ENCODE measurements at regions of chr13 and their contacts with region 1.

Region 1: GRCh38 chr13:29935309-29935981 is 85.0 kb upstream of the UBL3 start:
- DNase-seq: peak; percentile 91
- H3K4me3 Mint-ChIP-seq: peak overlapping the region; percentile 89
- H3K27ac Mint-ChIP-seq: peak overlapping the region; percentile 98
- H3K4me1 Mint-ChIP-seq: peaks cover 63% of the 10 kb centered on the region
- H3K27me3 Mint-ChIP-seq: no peaks in the 10 kb centered on the region

Region 2: GRCh38 chr13:29850224-29850898 is 85.1 kb before region 1 on chr13 and contains the start of gene UBL3:
- CTCF ChIA-PET with region 1: interaction called, 11 read pairs
- DNase-seq: peak; percentile 96
- H3K4me3 Mint-ChIP-seq: peak within 1 kb of the TSS; percentile 87
- H3K27ac Mint-ChIP-seq: peak within 1 kb of the TSS; percentile 99
- H3K4me1 Mint-ChIP-seq: peaks cover 48% of the 10 kb centered on the region
- H3K27me3 Mint-ChIP-seq: peaks cover 4% of the 10 kb centered on the region

Region 3: GRCh38 chr13:29923554-29924481 is 11.6 kb before region 1 on chr13:
- CTCF ChIA-PET with region 1: interaction called, 43 read pairs
- DNase-seq: peak; percentile 53
- H3K4me3 Mint-ChIP-seq: no peak overlapping the region
- H3K27ac Mint-ChIP-seq: no peak overlapping the region
- H3K4me1 Mint-ChIP-seq: peaks cover 25% of the 10 kb centered on the region
- H3K27me3 Mint-ChIP-seq: peaks cover 6% of the 10 kb centered on the region

Region 4: DNA sequence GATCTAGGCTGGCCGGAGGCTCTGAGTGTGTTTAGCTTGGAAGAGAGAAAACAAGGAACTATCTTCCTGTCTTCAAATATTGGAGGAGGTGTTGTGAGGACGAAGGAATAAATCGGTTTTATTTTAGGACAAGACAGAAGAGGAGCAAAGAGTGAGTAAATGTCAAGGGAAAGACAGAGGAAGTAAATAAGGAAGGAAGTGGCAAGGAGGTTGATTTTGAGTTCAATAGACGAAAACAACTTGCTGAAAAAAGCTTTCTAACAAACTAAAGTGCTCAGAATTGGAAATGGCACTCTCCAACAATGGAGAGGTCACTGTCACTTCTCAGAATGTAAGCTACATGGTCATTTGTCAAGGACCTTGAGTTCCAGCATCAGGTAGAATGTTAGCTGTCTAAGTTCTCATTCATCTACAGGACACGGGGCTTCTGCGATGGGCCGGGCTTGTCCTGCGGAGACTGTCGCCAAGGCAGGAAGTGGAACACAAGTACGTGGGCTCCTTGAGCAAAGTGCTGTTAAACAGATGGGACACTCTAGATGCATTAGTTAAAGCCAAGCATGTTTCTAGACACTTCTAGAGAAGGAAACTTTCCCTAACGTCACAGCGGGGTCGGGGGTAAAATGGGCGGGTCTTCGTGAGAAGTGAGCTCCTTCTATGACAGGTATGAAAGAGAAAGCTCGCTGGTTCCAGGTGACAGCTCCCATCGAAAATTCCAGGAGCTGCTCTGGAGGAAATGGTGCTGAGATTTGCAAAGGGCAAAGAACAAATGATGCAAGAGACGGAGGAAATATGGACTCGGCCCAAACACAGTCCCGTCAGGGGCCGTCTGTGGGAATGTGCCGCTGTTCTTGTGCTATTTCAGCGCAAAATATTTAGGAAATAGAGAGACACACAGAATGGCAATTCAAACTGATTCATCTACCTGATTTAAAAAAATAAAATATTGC is 18.9 kb after region 1 on chr13:
- CTCF ChIA-PET with region 1: interaction called, 10 read pairs
- DNase-seq: peak; percentile 71
- H3K4me3 Mint-ChIP-seq: peak overlapping the region; percentile 61
- H3K27ac Mint-ChIP-seq: peak overlapping the region; percentile 94
- H3K4me1 Mint-ChIP-seq: peaks cover 66% of the 10 kb centered on the region
- H3K27me3 Mint-ChIP-seq: peaks cover 4% of the 10 kb centered on the region

Region 5: DNA sequence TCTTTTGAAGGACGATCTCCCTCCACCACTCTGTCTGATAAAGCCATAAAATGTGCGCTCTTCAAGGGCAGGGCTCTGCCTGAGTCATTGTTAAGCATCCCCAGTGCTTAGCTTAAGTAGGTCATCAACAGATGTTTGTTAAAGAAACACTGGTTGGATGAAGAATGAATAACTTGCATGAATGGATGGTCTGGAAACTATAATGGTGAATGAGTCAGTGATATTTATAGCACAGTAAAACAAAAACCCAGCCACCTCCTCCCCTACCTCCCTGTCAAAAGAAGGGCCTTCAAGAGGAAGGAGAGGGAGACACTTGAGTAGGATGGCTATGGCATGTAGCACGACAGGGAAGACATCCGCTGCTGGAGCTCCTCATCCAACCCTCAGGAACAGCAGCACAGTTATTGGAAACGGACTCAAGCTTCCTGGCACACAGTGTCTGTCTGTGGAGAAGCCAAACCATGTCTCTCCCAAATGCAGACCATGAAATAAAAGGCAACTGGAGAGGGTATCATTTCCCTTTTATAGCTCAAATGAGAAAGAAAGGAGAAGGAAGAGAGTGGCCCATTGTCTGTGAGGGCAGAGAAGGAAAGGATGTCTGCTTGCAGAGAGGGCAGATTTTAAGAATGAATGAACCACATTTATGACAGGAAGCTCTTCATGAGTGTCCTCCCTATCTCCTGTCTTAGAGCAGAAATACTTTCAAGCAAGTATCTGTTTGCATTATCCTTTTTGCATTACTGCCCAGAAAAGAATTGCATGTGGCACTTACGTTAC is 98.4 kb after region 1 on chr13:
- CTCF ChIA-PET with region 1: no interaction called
- DNase-seq: no peak
- H3K4me3 Mint-ChIP-seq: no peak overlapping the region
- H3K27ac Mint-ChIP-seq: no peak overlapping the region
- H3K4me1 Mint-ChIP-seq: no peaks in the 10 kb centered on the region
- H3K27me3 Mint-ChIP-seq: peaks cover 40% of the 10 kb centered on the region